GM10248 (cell line): ENCODE measurements at regions of chr19 and their contacts with region 1.

Region 1: GRCh38 chr19:39052243-39052746 is 19.9 kb upstream of the FBXO27 start:
- DNase-seq: peak; percentile 73
- CTCF ChIP-seq: peak; percentile 78

Region 2: DNA sequence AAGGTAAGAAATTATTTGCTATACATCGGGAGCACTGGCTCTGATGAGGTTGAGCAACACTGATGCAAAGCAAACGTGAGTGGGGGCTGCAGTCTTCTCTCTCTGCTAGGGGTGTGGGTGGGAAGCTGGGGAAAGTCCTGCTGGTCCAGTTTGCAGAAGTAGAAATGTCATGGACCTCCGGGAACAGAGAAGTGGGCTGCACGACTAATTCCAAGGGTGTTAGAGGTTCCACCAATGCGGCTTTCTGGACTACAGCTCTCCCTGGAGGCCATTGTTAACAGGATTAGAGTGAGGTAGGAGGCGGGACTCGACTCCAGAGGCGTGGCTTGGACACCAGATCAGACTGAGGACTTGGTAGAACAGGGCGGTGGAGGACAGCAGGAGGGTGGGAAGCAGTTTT is 14.2 kb before region 1 on chr19:
- CTCF ChIA-PET with region 1: interaction called, 11 read pairs
- POLR2A ChIA-PET with region 1: no interaction called
- DNase-seq: no peak
- CTCF ChIP-seq: peak; percentile 13

Region 3: GRCh38 chr19:39070888-39071287 is 18.6 kb after region 1 on chr19:
- CTCF ChIA-PET with region 1: interaction called, 10 read pairs
- POLR2A ChIA-PET with region 1: no interaction called
- DNase-seq: no peak
- CTCF ChIP-seq: no peak